HEK293 (cell line): ENCODE measurements at regions of chr2 and their contacts with region 1.

Region 1: GRCh38 chr2:135913727-135914365 is 37.6 kb upstream of the MCM6 start:
- H3K4me3 ChIP-seq: no peak overlapping the region
- H3K27ac ChIP-seq: no peak overlapping the region
- H3K4me1 ChIP-seq: no peaks in the 10 kb centered on the region
- CTCF ChIP-seq: no peak

Region 2: GRCh38 chr2:135925571-135925970 is 11.7 kb after region 1 on chr2:
- CTCF ChIA-PET with region 1: interaction called, 12 read pairs
- POLR2A ChIA-PET with region 1: no interaction called
- H3K4me3 ChIP-seq: no peak overlapping the region
- H3K27ac ChIP-seq: no peak overlapping the region
- H3K4me1 ChIP-seq: no peaks in the 10 kb centered on the region
- CTCF ChIP-seq: no peak

Region 3: GRCh38 chr2:135997380-135997779 is 83.5 kb after region 1 on chr2:
- CTCF ChIA-PET with region 1: interaction called, 15 read pairs
- POLR2A ChIA-PET with region 1: no interaction called
- H3K4me3 ChIP-seq: no peak overlapping the region
- H3K27ac ChIP-seq: no peak overlapping the region
- H3K4me1 ChIP-seq: no peaks in the 10 kb centered on the region
- CTCF ChIP-seq: peak; percentile 47; the same call in 1 of the 2 replicates

Region 4: DNA sequence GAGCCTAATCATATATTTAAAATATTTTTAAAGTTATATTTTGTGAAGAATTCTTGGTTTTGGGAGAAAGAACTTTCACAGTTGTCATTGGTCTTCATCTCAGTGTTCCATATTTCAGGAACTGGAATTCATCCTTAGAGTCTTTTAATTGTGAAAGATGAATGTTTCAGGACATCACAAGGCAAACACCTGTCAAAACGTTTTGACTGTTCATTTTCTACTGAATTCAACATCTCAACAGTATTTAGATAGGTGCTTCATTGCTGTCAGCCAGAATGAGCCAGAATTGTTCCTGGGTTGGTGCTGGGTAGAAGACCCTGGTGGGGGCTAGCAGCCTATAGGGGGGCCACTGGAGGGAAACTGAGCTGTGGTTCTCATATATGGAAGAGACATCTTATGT is 459.2 kb after region 1 on chr2:
- CTCF ChIA-PET with region 1: interaction called, 46 read pairs
- POLR2A ChIA-PET with region 1: no interaction called
- H3K4me3 ChIP-seq: no peak overlapping the region
- H3K27ac ChIP-seq: no peak overlapping the region
- H3K4me1 ChIP-seq: no peaks in the 10 kb centered on the region
- CTCF ChIP-seq: no peak

Region 5: DNA sequence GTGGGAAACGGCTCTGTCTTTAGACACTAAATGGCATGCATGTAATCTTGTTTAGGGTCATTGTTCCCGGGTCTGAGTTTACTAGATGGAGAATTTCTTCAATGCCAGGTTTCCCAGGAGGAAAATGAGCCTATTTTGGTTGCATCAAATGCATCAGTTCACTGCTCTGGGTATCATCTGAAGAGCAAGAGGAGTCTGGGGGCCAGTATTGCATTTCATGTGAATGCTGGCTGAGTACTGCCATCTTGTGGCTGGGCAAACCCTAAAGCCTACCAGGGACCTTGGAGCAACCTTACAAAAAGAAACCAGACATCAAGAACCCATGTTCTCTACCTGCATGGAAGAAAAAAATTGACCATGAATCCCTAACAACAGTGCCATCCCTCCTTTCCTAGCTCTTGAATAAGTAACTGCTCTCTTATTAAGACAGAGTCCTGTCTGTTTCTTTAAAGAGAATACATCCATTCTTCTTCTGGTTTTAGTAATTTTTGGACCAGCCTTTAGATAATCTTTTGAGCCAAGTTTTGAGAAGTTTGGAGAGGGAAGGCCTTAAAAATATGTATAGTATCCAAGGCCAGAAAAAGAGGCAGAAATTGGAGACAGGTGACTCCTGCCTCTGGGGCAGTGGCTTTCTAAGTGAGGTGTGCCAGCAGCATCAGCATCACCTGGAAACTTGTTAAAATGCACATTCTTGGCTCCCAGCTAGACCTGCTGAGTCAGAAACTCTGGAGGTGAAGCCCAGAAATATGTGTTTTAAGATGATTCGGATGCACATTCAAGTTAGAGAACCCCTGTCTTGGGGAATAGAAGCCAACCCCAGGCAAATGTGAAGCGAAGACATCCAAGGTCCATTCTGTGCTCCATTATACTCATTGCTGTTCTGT is 465.1 kb after region 1 on chr2:
- CTCF ChIA-PET with region 1: interaction called, 65 read pairs
- POLR2A ChIA-PET with region 1: interaction called, 4 read pairs
- H3K4me3 ChIP-seq: no peak overlapping the region
- H3K27ac ChIP-seq: no peak overlapping the region
- H3K4me1 ChIP-seq: no peaks in the 10 kb centered on the region
- CTCF ChIP-seq: peak; percentile 54

Region 6: GRCh38 chr2:136384531-136385303 is 470.9 kb after region 1 on chr2:
- CTCF ChIA-PET with region 1: interaction called, 65 read pairs
- POLR2A ChIA-PET with region 1: interaction called, 4 read pairs
- H3K4me3 ChIP-seq: no peak overlapping the region
- H3K27ac ChIP-seq: no peak overlapping the region
- H3K4me1 ChIP-seq: no peaks in the 10 kb centered on the region
- CTCF ChIP-seq: no peak